SK-N-SH (cell line): ENCODE measurements at regions of chr7 and their contacts with region 1.

Region 1: DNA sequence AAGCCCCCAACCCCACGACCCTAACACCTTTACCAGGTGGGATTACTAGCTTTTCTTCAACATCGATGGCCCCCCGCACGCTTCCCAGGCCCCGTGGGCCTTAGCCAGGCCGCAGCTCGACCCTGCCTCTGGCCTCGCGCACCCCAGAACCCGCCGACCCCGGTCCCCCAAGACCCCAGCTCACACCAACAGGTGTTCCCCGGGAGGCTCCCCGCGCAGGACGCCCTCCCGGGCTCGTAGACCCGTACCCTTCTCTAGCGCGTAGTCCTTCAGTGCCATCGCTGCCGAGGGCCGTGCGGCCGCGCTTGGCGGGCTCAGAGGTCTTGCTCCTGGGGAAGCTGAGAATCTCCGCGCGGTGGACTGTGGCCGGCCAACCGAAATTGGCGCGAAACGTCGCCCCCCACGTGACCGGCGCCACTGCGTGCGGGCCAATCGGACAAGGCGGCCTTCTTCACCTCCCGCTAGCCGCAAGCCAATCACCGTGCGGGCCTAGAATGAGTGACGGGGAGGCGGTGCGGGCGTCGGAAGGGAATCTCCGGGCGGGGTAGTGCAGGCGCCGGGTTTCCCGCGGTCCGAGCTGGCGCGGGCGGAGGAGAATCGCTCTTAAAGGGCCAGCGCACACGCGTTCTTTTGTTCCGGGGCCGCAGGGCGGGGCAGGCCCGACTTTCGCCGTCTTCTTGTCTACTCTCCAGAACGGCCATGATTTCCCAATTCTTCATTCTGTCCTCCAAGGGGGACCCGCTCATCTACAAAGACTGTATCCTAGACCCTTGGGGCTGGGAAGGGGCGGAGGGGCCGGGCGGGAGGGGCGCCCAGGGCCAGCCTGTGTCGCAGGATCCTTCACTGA is at the starts of genes AP4M1 and MCM7:
- DNase-seq: peak; percentile 97
- H3K4me3 ChIP-seq: peak within 1 kb of the TSS; percentile 70 to 99
- H3K27ac ChIP-seq: peak within 1 kb of the TSS; percentile 94 to 95
- H3K4me1 ChIP-seq: peaks cover 24 to 33% of the 10 kb centered on the region in 2 experiments
- H3K27me3 ChIP-seq: no peaks in the 10 kb centered on the region
- CTCF ChIP-seq: no peak
- EP300 ChIP-seq: no peak; a peak in 1 of 4 replicates
- RAD21 ChIP-seq: no peak
- polyA plus RNA-seq, gene AP4M1: 35.0 and 39.2 TPM in 2 replicates
- polyA plus RNA-seq, gene MCM7: 235 and 241 TPM in 2 replicates

Region 2: GRCh38 chr7:100015232-100016209 is 85.7 kb before region 1 on chr7 and contains the start of gene ZKSCAN1:
- CTCF ChIA-PET with region 1: no interaction called
- POLR2A ChIA-PET with region 1: interaction called, 20 read pairs
- DNase-seq: peak; percentile 98
- H3K4me3 ChIP-seq: peak within 1 kb of the TSS; percentile 78 to 89
- H3K27ac ChIP-seq: peak within 1 kb of the TSS; percentile 78 to 85
- H3K4me1 ChIP-seq: peaks cover 0 to 12% of the 10 kb centered on the region in 2 experiments; a peak in 3 of 4 replicates
- H3K27me3 ChIP-seq: no peaks in the 10 kb centered on the region
- CTCF ChIP-seq: no peak
- EP300 ChIP-seq: no peak
- RAD21 ChIP-seq: no peak; the same call in 1 of the 2 replicates
- polyA plus RNA-seq, gene ZKSCAN1: 21.1 and 30.7 TPM in 2 replicates

Region 3: GRCh38 chr7:100081535-100082102 is 19.6 kb before region 1 on chr7 and contains the start of gene ZNF3:
- CTCF ChIA-PET with region 1: interaction called, 39 read pairs
- POLR2A ChIA-PET with region 1: interaction called, 98 read pairs
- DNase-seq: peak; percentile 99
- H3K4me3 ChIP-seq: peak within 1 kb of the TSS; percentile 67 to 94
- H3K27ac ChIP-seq: peak within 1 kb of the TSS; percentile 76 to 87
- H3K4me1 ChIP-seq: peaks cover 12 to 19% of the 10 kb centered on the region in 2 experiments; a peak in 3 of 4 replicates
- H3K27me3 ChIP-seq: no peaks in the 10 kb centered on the region
- CTCF ChIP-seq: peak; percentile 100
- EP300 ChIP-seq: peak; percentile 30 to 63; a peak in 3 of 4 replicates
- RAD21 ChIP-seq: peak; percentile 85
- polyA plus RNA-seq, gene ZNF3: 30.5 and 45.2 TPM in 2 replicates

Region 4: GRCh38 chr7:100111914-100112313 is 10.7 kb after region 1 on chr7:
- CTCF ChIA-PET with region 1: interaction called, 8 read pairs
- POLR2A ChIA-PET with region 1: interaction called, 32 read pairs
- DNase-seq: peak; percentile 38
- H3K4me3 ChIP-seq: no peak overlapping the region
- H3K27ac ChIP-seq: no peak overlapping the region
- H3K4me1 ChIP-seq: no peaks in the 10 kb centered on the region
- H3K27me3 ChIP-seq: no peaks in the 10 kb centered on the region
- CTCF ChIP-seq: no peak
- EP300 ChIP-seq: no peak
- RAD21 ChIP-seq: no peak

Region 5: GRCh38 chr7:100126931-100127865 is 26.0 kb after region 1 on chr7 and contains the start of gene MBLAC1:
- CTCF ChIA-PET with region 1: interaction called, 74 read pairs
- POLR2A ChIA-PET with region 1: interaction called, 70 read pairs
- DNase-seq: peak; percentile 99
- H3K4me3 ChIP-seq: peak within 1 kb of the TSS; percentile 65 to 84
- H3K27ac ChIP-seq: peak within 1 kb of the TSS; percentile 96 to 97
- H3K4me1 ChIP-seq: peaks cover 6 to 20% of the 10 kb centered on the region in 2 experiments; a peak in 2 of 4 replicates
- H3K27me3 ChIP-seq: no peaks in the 10 kb centered on the region
- CTCF ChIP-seq: no peak
- EP300 ChIP-seq: peak in 1 of 2 experiments; percentile 51; a peak in 1 of 4 replicates
- RAD21 ChIP-seq: no peak
- polyA plus RNA-seq, gene MBLAC1: 2.5 and 4.4 TPM in 2 replicates

Region 6: DNA sequence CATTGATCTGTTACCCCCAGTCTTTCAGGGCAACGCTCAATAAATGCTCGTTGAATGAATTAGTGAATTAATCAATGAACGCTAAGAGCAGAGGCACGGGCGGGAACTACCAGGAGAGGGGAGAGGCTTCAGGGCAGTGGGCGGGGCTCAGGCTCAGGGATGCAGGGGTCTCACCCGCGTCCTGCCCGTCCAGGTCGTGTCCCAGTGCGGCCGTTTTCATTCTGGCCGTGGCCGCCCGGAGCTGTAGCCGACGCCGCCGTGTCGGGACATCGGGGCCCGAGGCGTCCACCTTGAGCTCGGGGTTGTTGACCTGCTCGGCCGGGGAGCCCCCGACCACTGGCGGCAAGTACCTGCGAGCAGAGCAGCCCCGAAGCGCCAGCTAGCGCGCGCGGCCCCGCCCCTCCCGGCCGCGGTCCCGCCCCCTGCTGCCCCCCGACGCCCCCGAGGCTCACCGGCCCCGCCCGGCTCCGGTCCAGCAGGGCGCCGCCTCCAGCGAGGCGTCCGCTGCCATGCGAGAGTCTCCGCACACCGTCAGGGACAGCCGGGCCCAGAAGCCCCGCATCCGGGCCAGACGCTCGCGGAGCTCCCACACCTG is 69.9 kb after region 1 on chr7:
- CTCF ChIA-PET with region 1: no interaction called
- POLR2A ChIA-PET with region 1: no interaction called
- DNase-seq: no peak
- H3K4me3 ChIP-seq: no peak overlapping the region
- H3K27ac ChIP-seq: no peak overlapping the region
- H3K4me1 ChIP-seq: peaks cover 0 to 27% of the 10 kb centered on the region in 2 experiments; a peak in 1 of 4 replicates
- H3K27me3 ChIP-seq: no peaks in the 10 kb centered on the region
- CTCF ChIP-seq: no peak
- EP300 ChIP-seq: no peak
- RAD21 ChIP-seq: no peak

Region 7: GRCh38 chr7:100428199-100428966 is 327.1 kb after region 1 on chr7 and contains the start of gene ZCWPW1:
- CTCF ChIA-PET with region 1: no interaction called
- POLR2A ChIA-PET with region 1: interaction called, 12 read pairs
- DNase-seq: peak; percentile 94
- H3K4me3 ChIP-seq: peak within 1 kb of the TSS; percentile 78 to 95
- H3K27ac ChIP-seq: peak within 1 kb of the TSS; percentile 99 to 100
- H3K4me1 ChIP-seq: peaks cover 17 to 33% of the 10 kb centered on the region in 2 experiments; a peak in 3 of 4 replicates
- H3K27me3 ChIP-seq: no peaks in the 10 kb centered on the region
- CTCF ChIP-seq: no peak
- EP300 ChIP-seq: no peak
- RAD21 ChIP-seq: no peak
- polyA plus RNA-seq, gene ZCWPW1: 3.4 and 4.1 TPM in 2 replicates